ENCODE measurements at regions of chr13 and their contacts with region 1.

Region 1: DNA sequence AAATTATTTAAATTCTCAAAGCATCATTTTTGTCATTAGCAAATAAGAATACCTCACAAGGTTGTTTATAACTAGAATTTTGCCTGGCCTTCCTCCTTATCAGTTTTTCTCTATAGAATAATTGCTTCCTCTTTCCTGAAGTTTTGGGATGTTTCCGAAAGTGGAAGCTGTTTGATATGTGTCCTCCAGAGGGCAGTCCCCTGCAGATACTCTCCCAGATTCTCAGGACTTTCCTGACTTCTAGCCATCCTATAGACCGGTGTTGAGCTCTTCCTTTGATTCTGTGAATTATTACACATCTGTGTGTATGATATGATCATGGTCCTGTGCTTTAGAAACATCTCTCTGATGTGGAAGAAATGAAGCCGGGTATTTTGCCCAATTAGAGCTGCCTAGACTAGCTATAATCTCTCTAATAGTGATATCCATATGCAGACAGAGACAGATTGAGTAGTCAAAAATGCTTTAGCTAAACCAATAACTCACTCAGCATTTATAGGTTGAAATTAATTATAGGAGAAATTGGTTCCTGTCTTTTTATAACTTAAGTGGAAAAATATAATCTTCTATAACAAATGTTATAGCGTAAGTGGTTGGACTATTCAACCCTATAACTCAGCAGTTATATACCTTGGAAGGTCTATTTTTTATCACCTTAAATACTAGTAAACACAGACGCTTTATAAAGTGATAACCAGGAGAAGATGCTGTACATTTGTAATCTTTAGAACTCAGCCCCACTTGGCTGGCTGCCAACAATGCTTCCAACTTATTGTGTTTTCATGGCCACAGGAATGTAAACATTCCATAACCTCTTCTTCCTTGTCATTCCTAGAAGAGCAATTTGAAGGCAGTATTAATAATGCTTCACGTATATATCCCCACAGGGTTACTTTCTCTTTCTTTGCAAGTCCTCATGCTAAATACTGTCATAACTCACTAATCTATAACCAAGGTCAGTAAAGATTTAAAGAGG is 201.0 kb upstream of the RXFP2 start:
- DNase-seq: peak; percentile 49
- H3K4me3 ChIP-seq: no peak overlapping the region
- H3K27ac ChIP-seq: no peak overlapping the region
- H3K4me1 ChIP-seq: peaks cover 5% of the 10 kb centered on the region
- H3K27me3 ChIP-seq: peaks cover 5 to 14% of the 10 kb centered on the region in 2 experiments
- CTCF ChIP-seq: peak; percentile 58 to 63
- POLR2A ChIP-seq: no peak

Region 2: GRCh38 chr13:31236211-31236786 is 302.1 kb before region 1 on chr13:
- CTCF ChIA-PET with region 1: interaction called, 15 read pairs
- POLR2A ChIA-PET with region 1: no interaction called
- dilution Hi-C with region 1: no loop called
- intact Hi-C with region 1: loop called (anchors 2 kb)
- DNase-seq: peak; percentile 38
- H3K4me3 ChIP-seq: no peak overlapping the region
- H3K27ac ChIP-seq: no peak overlapping the region
- H3K4me1 ChIP-seq: no peaks in the 10 kb centered on the region
- H3K27me3 ChIP-seq: no peaks in the 10 kb centered on the region
- CTCF ChIP-seq: peak; percentile 41 to 44
- POLR2A ChIP-seq: no peak

Region 3: DNA sequence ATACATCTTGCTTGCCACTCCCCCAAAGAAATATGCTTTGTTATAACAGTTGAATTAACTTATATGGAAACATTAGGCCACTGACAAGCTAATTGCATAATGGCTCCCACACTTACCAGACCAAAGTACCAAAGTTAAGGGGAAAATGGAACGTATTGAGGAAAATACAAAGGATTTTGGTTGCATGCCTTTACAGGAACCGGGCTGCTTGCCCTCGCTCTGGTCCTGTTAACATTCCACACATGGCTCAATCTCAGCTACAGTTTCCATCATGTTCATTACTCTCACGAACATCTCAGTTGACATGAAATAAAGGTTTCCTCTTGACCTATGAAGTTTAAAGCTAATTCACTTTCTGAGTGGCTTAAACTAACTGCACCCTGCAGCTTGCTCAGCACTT is 19.7 kb before region 1 on chr13:
- CTCF ChIA-PET with region 1: interaction called, 20 read pairs
- POLR2A ChIA-PET with region 1: no interaction called
- dilution Hi-C with region 1: no loop called
- intact Hi-C with region 1: no loop called
- DNase-seq: no peak
- H3K4me3 ChIP-seq: no peak overlapping the region
- H3K27ac ChIP-seq: no peak overlapping the region
- H3K4me1 ChIP-seq: no peaks in the 10 kb centered on the region
- H3K27me3 ChIP-seq: peaks cover 8 to 18% of the 10 kb centered on the region in 2 experiments
- CTCF ChIP-seq: no peak
- POLR2A ChIP-seq: no peak

Region 4: DNA sequence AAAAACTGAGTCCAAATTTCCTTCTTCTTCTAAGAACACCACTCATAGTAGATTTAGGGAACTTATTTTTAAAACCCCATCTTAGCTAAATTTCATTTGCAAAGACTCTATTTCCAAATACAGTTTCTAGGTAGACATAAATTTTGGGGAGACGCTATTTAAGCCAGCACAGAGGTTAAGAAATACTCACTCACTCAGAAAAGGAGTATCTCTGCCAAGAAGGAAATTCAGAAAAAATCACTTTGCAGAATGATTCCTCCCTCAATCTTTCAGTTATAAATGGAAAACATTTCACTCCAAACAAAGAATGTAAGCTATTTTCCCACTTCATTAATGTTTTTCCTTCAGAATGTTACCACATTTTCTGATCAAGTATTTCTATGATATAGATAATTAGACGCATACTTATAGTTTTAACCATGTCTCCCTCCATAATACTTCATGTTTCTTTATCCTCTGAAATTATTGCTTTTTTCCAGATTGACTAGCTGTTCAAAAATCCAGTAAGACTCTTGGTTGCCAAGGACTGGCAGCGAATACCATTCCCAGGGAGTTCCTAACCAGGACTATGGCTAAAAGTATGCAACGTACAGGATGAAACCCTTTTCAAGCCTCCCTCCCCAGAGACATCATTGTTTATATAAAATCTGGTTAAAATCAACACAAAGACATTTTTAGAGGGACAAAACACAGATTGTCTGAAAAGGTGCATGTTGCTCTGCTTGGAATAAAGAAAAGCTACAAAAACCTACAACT is 148.5 kb after region 1 on chr13:
- CTCF ChIA-PET with region 1: interaction called, 12 read pairs
- POLR2A ChIA-PET with region 1: no interaction called
- dilution Hi-C with region 1: no loop called
- intact Hi-C with region 1: no loop called
- DNase-seq: no peak
- H3K4me3 ChIP-seq: no peak overlapping the region
- H3K27ac ChIP-seq: no peak overlapping the region
- H3K4me1 ChIP-seq: no peaks in the 10 kb centered on the region
- H3K27me3 ChIP-seq: peaks cover 4 to 15% of the 10 kb centered on the region in 2 experiments
- CTCF ChIP-seq: no peak
- POLR2A ChIP-seq: no peak

Region 5: GRCh38 chr13:31722673-31723072 is 184.3 kb after region 1 on chr13:
- CTCF ChIA-PET with region 1: interaction called, 18 read pairs
- POLR2A ChIA-PET with region 1: no interaction called
- dilution Hi-C with region 1: no loop called
- intact Hi-C with region 1: no loop called
- DNase-seq: peak; percentile 62
- H3K4me3 ChIP-seq: no peak overlapping the region
- H3K27ac ChIP-seq: no peak overlapping the region
- H3K4me1 ChIP-seq: no peaks in the 10 kb centered on the region
- H3K27me3 ChIP-seq: peaks cover 15 to 20% of the 10 kb centered on the region in 2 experiments
- CTCF ChIP-seq: no peak
- POLR2A ChIP-seq: no peak

Region 6: GRCh38 chr13:31797154-31797775 is 258.9 kb after region 1 on chr13:
- CTCF ChIA-PET with region 1: interaction called, 43 read pairs
- POLR2A ChIA-PET with region 1: no interaction called
- dilution Hi-C with region 1: no loop called
- intact Hi-C with region 1: loop called (anchors 1 kb)
- DNase-seq: peak; percentile 52
- H3K4me3 ChIP-seq: no peak overlapping the region
- H3K27ac ChIP-seq: no peak overlapping the region
- H3K4me1 ChIP-seq: peaks cover 22% of the 10 kb centered on the region
- H3K27me3 ChIP-seq: peaks cover 5 to 10% of the 10 kb centered on the region in 2 experiments
- CTCF ChIP-seq: peak in 1 of 2 donors; percentile 36
- POLR2A ChIP-seq: no peak